Left cardiac atrium (tissue), 4 donors: ENCODE measurements at regions of chr20 and their contacts with region 1.

Region 1: GRCh38 chr20:34129518-34130162 is 17.6 kb upstream of the EIF2S2 start:
- DNase-seq: peak; percentile 60
- ATAC-seq: peak; percentile 84 to 90

Region 2: DNA sequence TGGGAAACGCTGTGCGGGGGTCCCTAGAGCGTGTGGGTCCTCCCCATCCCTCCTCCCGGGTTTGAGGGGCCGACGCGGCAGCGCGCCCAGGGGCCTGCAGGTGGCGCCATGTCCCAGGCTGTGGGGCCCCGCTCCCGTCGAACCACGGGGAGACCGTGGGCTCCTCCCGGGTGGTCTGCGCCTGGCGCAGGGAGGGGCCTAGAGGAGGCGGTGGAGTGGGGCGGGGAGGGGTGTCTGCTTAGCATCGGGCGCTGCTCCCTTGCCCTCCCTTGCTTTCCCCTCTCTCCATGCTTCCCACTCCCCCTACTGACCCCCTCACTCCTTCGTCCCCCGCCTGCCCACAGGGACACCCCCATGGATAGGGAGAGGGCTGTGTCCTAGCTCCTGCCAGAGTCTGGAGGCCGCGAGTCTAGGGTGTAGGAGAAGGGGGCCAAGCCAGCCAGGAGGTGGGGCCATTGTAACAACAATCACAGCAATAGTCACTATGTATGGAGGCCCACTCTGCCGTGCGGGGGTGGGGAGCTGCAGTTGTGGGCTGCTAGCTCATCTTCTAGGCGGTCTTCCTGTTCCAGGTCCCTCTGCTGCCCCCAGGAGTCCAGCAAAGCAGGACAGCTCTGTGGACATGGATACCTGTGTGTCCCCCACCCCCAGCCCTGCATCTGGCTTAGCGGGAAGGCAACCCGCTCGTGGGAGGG is 266.8 kb before region 1 on chr20:
- intact Hi-C with region 1: loop called (anchors 5 to 10 kb)
- DNase-seq: peak; percentile 67
- ATAC-seq: peak; percentile 75 to 89

Region 3: DNA sequence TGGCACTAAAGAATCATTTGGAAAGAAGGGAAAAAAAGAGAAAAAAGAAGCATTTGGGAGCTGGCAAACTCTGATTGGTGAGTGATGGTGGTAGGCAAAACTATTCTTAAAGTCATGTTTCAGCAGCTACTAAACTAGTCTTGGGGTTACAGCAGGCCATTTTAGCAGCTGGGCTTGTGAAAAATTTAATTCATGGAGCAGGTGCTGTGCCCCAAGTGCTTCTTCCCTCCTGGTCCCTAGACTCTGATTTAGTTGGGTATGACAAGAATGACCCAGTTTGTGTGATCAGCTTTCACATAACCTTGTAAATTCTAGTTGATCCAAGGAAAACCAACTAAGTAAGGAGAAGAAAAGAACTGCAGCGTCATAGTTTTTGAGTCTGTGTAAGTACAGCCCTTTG is 110.5 kb after region 1 on chr20:
- intact Hi-C with region 1: no loop called
- DNase-seq: no peak
- ATAC-seq: no peak